ENCODE measurements at regions of chr10 and their contacts with region 1.

Region 1: GRCh38 chr10:77907900-77908717 is 18.4 kb downstream of the DLG5 start:
- DNase-seq: peak; percentile 68
- H3K4me3 Mint-ChIP-seq: no peak overlapping the region
- H3K27ac Mint-ChIP-seq: peak overlapping the region; percentile 76
- H3K4me1 Mint-ChIP-seq: peaks cover 58% of the 10 kb centered on the region
- H3K27me3 Mint-ChIP-seq: no peaks in the 10 kb centered on the region
- CTCF ChIP-seq: peak; percentile 37

Region 2: GRCh38 chr10:77840644-77841043 is 67.5 kb before region 1 on chr10:
- CTCF ChIA-PET with region 1: no interaction called
- POLR2A ChIA-PET with region 1: no interaction called
- intact Hi-C with region 1: no loop called
- DNase-seq: no peak
- H3K4me3 Mint-ChIP-seq: no peak overlapping the region
- H3K27ac Mint-ChIP-seq: peak overlapping the region; percentile 27
- H3K4me1 Mint-ChIP-seq: peaks cover 21% of the 10 kb centered on the region
- H3K27me3 Mint-ChIP-seq: no peaks in the 10 kb centered on the region
- CTCF ChIP-seq: no peak

Region 3: GRCh38 chr10:77919708-77920099 is 11.6 kb after region 1 on chr10:
- CTCF ChIA-PET with region 1: interaction called, 7 read pairs
- POLR2A ChIA-PET with region 1: interaction called, 12 read pairs
- intact Hi-C with region 1: no loop called
- DNase-seq: peak; percentile 74
- H3K4me3 Mint-ChIP-seq: peak overlapping the region; percentile 19
- H3K27ac Mint-ChIP-seq: peak overlapping the region; percentile 46
- H3K4me1 Mint-ChIP-seq: peaks cover 52% of the 10 kb centered on the region
- H3K27me3 Mint-ChIP-seq: no peaks in the 10 kb centered on the region
- CTCF ChIP-seq: no peak

Region 4: DNA sequence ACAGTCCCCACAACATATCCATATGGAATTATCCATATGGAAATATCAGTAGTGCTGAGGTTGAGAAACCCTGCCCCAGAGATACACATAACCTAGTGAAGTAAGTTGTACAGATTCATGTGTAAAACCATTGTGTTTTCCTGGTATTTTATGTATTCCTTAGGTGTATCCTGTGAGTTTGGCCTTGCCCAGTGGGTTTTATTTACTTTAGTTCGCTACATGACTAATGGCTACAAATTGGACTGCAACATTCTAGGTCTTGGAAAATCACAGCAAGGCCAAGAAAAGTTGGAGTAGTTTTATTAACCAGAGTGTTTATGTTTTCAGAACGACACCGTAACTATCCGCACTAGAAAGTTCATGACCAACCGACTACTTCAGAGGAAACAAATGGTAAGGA is 126.9 kb after region 1 on chr10:
- CTCF ChIA-PET with region 1: no interaction called
- POLR2A ChIA-PET with region 1: no interaction called
- intact Hi-C with region 1: no loop called
- DNase-seq: no peak
- H3K4me3 Mint-ChIP-seq: peak overlapping the region; percentile 84
- H3K27ac Mint-ChIP-seq: peak overlapping the region; percentile 77
- H3K4me1 Mint-ChIP-seq: peaks cover 27% of the 10 kb centered on the region
- H3K27me3 Mint-ChIP-seq: no peaks in the 10 kb centered on the region
- CTCF ChIP-seq: no peak